ENCODE measurements at regions of chr2 and their contacts with region 1.

Region 1: DNA sequence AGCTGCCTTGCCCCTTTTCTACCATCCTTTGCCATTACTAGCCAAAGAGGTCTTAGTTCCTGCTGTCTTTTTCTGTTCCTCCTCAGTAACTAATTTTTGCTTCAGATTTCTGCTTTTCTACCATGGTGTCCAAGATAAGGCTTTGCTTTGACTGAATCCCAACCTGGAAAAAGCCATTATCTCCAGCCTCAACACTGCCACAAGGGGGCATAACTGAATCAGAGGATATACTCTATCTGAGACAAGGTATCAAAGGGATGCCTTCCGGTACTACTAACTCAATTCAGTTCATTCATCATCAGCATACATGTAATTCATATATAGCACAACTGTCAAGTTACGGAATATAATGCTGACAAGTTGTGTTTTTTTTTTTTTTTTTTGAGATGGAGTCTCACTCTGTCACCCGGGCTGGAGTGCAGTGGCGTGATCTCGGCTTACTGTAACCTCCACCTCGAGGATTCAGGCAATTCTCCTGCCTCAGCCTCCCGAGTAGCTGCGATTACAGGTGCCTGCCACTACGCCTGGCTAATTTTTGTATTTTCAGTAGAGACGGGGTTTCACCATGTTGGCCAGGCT is 11.4 kb downstream of the OSGEPL1 start:
- DNase-seq: no peak
- H3K4me3 ChIP-seq: no peak overlapping the region
- H3K27ac ChIP-seq: no peak overlapping the region
- H3K27me3 ChIP-seq: no peaks in the 10 kb centered on the region
- CTCF ChIP-seq: peak; percentile 82

Region 2: GRCh38 chr2:189393440-189394111 is 357.6 kb before region 1 on chr2:
- CTCF ChIA-PET with region 1: interaction called, 10 read pairs
- POLR2A ChIA-PET with region 1: no interaction called
- DNase-seq: peak; percentile 87
- H3K4me3 ChIP-seq: no peak overlapping the region
- H3K27ac ChIP-seq: peak overlapping the region; percentile 11
- H3K27me3 ChIP-seq: no peaks in the 10 kb centered on the region
- CTCF ChIP-seq: no peak

Region 3: GRCh38 chr2:189762551-189763298 is 11.6 kb after region 1 on chr2 and contains the start of gene OSGEPL1:
- CTCF ChIA-PET with region 1: interaction called, 56 read pairs
- POLR2A ChIA-PET with region 1: no interaction called
- DNase-seq: peak; percentile 71
- H3K4me3 ChIP-seq: peak within 1 kb of the TSS; percentile 75
- H3K27ac ChIP-seq: peak within 1 kb of the TSS; percentile 78
- H3K27me3 ChIP-seq: no peaks in the 10 kb centered on the region
- CTCF ChIP-seq: peak; percentile 72
- polyA plus RNA-seq, gene OSGEPL1: 3.9 and 6.0 TPM in 2 replicates

Region 4: GRCh38 chr2:190069936-190070696 is 318.9 kb after region 1 on chr2:
- CTCF ChIA-PET with region 1: interaction called, 44 read pairs
- POLR2A ChIA-PET with region 1: no interaction called
- DNase-seq: peak; percentile 43
- H3K4me3 ChIP-seq: no peak overlapping the region
- H3K27ac ChIP-seq: no peak overlapping the region
- H3K27me3 ChIP-seq: no peaks in the 10 kb centered on the region
- CTCF ChIP-seq: peak; percentile 74

Measured in AG04450 (cell line).